IMR-90 (cell line): ENCODE measurements at regions of chr1 and their contacts with region 1.

Region 1: DNA sequence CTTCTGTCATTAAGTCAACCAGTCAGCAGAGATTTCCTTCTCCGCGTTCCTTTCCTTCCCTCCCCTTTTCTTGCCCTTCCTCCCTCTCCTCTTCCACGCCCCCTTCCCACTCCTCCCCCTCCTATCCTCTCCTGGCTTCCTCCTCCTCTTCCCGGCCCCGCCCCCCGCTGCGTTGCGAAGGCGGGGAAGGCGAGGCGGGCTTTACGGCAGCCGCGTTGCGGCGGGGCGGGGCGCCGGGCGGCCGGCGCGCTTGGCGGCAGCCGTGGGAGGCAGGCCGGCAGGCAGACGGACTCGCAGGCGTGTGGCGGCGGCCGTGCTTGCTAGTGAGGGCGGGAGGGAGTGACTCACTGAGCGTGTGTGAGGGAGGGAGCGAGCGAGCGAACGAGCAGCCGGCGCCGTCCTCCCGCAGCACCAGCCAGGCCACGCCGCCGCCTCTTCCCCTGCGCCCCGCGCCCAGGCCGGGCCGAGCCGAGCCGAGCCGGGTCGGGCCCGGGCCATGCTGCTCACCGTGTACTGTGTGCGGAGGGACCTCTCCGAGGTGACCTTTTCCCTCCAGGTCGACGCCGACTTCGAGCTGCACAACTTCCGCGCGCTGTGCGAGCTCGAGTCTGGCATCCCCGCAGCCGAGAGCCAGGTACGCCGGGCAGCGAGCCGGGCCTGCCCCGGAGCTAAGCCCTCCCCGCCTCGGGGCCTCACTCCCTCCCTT is at the start of gene DDI2:
- DNase-seq: peak; percentile 97
- ATAC-seq: peak; percentile 94
- H3K4me3 ChIP-seq: peak within 1 kb of the TSS; percentile 76
- H3K27ac ChIP-seq: peak within 1 kb of the TSS; percentile 88
- H3K4me1 ChIP-seq: peaks cover 7% of the 10 kb centered on the region
- H3K27me3 ChIP-seq: no peaks in the 10 kb centered on the region
- CTCF ChIP-seq: no peak
- POLR2A ChIP-seq: peak; percentile 77; the same call in 1 of the 2 replicates
- RAD21 ChIP-seq: peak; percentile 5; the same call in 1 of the 2 replicates
- total RNA-seq, gene DDI2: 8.6 and 13.4 TPM in 2 replicates

Region 2: DNA sequence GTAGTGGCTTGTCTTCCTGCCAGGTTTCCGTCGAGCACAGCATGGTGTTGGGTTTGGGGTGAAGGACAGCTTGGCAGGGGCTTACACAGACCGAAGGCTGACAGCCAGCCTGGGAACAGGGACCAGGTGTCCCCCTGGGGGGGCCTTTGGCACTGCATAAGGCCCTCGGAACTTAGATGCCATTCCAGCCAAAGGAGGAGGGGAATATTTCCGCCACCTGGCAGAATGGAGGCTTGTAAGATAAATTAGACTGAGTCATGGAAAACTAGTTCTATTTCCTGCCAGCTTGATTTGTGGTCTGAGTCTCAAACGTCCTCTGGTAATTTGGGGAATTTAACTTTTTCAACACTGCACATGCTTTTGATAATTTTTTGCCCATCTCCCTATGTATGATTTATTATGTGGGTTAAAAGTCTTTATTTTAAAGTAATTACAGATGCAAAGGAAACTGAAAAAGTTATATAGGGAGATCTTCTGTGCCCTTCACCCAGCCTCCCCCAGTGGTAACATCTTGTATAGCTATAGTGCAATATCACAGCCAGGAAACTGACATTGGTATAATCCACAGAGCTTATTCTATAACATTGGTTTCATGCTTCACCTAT is 475.3 kb before region 1 on chr1:
- CTCF ChIA-PET with region 1: no interaction called
- POLR2A ChIA-PET with region 1: no interaction called
- dilution Hi-C with region 1: no loop called
- in situ Hi-C with region 1: no loop called
- intact Hi-C with region 1: no loop called
- DNase-seq: peak; percentile 52
- ATAC-seq: no peak
- H3K4me3 ChIP-seq: no peak overlapping the region
- H3K27ac ChIP-seq: no peak overlapping the region
- H3K4me1 ChIP-seq: no peaks in the 10 kb centered on the region; the same call in 1 of the 2 replicates
- H3K27me3 ChIP-seq: peaks cover 6% of the 10 kb centered on the region; the same call in 1 of the 2 replicates
- CTCF ChIP-seq: no peak
- POLR2A ChIP-seq: no peak
- RAD21 ChIP-seq: no peak

Region 3: GRCh38 chr1:15305468-15305770 is 311.9 kb before region 1 on chr1:
- CTCF ChIA-PET with region 1: no interaction called
- POLR2A ChIA-PET with region 1: no interaction called
- dilution Hi-C with region 1: no loop called
- in situ Hi-C with region 1: no loop called
- intact Hi-C with region 1: no loop called
- DNase-seq: peak; percentile 31
- ATAC-seq: no peak
- H3K4me3 ChIP-seq: no peak overlapping the region
- H3K27ac ChIP-seq: no peak overlapping the region
- H3K4me1 ChIP-seq: no peaks in the 10 kb centered on the region
- H3K27me3 ChIP-seq: peaks cover 5% of the 10 kb centered on the region; the same call in 1 of the 2 replicates
- CTCF ChIP-seq: no peak
- POLR2A ChIP-seq: no peak
- RAD21 ChIP-seq: no peak

Region 4: GRCh38 chr1:15684468-15685291 is 67.4 kb after region 1 on chr1:
- CTCF ChIA-PET with region 1: no interaction called
- POLR2A ChIA-PET with region 1: no interaction called
- dilution Hi-C with region 1: no loop called
- in situ Hi-C with region 1: no loop called
- intact Hi-C with region 1: loop called (anchors 5 kb)
- DNase-seq: no peak
- ATAC-seq: peak; percentile 19
- H3K4me3 ChIP-seq: peak overlapping the region; percentile 99
- H3K27ac ChIP-seq: peak overlapping the region; percentile 76
- H3K4me1 ChIP-seq: peaks cover 19% of the 10 kb centered on the region
- H3K27me3 ChIP-seq: no peaks in the 10 kb centered on the region
- CTCF ChIP-seq: no peak
- POLR2A ChIP-seq: no peak
- RAD21 ChIP-seq: no peak

Region 5: GRCh38 chr1:15703562-15703961 is 86.2 kb after region 1 on chr1:
- CTCF ChIA-PET with region 1: no interaction called
- POLR2A ChIA-PET with region 1: no interaction called
- dilution Hi-C with region 1: no loop called
- in situ Hi-C with region 1: no loop called
- intact Hi-C with region 1: loop called (anchors 5 kb)
- DNase-seq: peak; percentile 91
- ATAC-seq: peak; percentile 97
- H3K4me3 ChIP-seq: no peak overlapping the region
- H3K27ac ChIP-seq: peak overlapping the region; percentile 76
- H3K4me1 ChIP-seq: peaks cover 16% of the 10 kb centered on the region; the same call in 1 of the 2 replicates
- H3K27me3 ChIP-seq: no peaks in the 10 kb centered on the region
- CTCF ChIP-seq: no peak
- POLR2A ChIP-seq: peak; percentile 38; the same call in 1 of the 2 replicates
- RAD21 ChIP-seq: peak; percentile 2; the same call in 1 of the 2 replicates